ENCODE measurements at regions of chr4 and their contacts with region 1.

Region 1: GRCh38 chr4:8391972-8392371 is 48.6 kb downstream of the ACOX3 start:
- DNase-seq: peak; percentile 53
- H3K4me3 ChIP-seq: no peak overlapping the region
- H3K27ac ChIP-seq: peak overlapping the region; percentile 55 to 87 (median 78)
- H3K4me1 ChIP-seq: peaks cover 9 to 32% (median 16%) of the 10 kb centered on the region in 4 donors
- H3K27me3 ChIP-seq: no peaks in the 10 kb centered on the region
- CTCF ChIP-seq: no peak
- EP300 ChIP-seq: no peak
- POLR2A ChIP-seq: no peak

Region 2: DNA sequence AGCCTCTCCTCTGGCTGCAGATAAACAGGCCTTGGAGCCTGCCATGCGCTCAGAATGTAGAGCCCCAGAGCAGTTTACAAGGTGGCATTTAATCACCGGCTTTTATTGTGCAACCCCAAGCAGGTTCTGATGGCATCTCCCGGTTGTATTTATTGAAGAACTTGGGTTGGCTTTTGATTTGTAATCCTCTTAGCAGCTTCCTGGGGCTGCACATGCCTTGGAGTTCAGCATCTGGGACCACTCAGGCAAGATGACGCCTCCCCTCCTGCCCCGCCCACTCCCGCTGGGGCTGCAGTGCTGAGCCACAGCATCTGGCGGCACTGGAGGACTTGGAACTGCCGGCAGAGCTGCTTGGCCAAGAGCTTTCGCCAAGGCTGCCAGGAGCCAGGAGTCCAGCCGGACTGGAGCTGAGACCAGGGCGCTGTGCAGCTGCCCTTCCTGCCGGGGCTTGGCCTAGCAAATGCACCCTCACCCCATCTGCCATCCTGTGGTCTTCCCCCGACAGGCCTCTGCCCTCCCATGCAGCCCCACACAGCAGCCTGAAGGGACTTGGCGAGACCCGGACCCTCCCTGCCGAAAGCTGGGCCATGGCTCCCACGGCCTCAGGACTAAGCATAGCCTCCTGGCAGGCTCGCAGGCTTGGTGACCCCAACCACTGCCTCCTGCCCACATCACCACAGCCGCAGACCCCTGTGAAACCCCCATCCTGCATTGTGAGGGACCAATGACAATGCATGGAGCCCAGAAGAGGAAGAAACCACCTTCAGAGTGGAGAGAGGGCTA is 117.0 kb before region 1 on chr4:
- in situ Hi-C with region 1: no loop called
- intact Hi-C with region 1: loop called (anchors 5 kb)
- DNase-seq: peak; percentile 74
- H3K4me3 ChIP-seq: no peak overlapping the region
- H3K27ac ChIP-seq: peak overlapping the region; percentile 73 to 83 (median 75)
- H3K4me1 ChIP-seq: peaks cover 23 to 48% (median 33%) of the 10 kb centered on the region in 4 donors
- H3K27me3 ChIP-seq: peaks cover 11% of the 10 kb centered on the region
- CTCF ChIP-seq: peak in 1 of 5 experiments; percentile 26
- EP300 ChIP-seq: peak; percentile 26
- POLR2A ChIP-seq: no peak